ENCODE measurements at regions of chr12 and their contacts with region 1.

Region 1: GRCh38 chr12:57069523-57069922 is 9.1 kb downstream of the NEMP1 start:
- DNase-seq: no peak
- H3K4me3 ChIP-seq: no peak overlapping the region
- H3K27ac ChIP-seq: peak overlapping the region; percentile 82
- H3K4me1 ChIP-seq: peaks cover 5% of the 10 kb centered on the region
- H3K27me3 ChIP-seq: no peaks in the 10 kb centered on the region
- CTCF ChIP-seq: peak; percentile 86 to 93 (median 87)
- POLR2A ChIP-seq: no peak

Region 2: GRCh38 chr12:57112492-57113294 is 43.2 kb after region 1 on chr12:
- intact Hi-C with region 1: loop called (anchors 2 kb)
- DNase-seq: peak in 1 of 2 donors; percentile 87
- H3K4me3 ChIP-seq: peak overlapping the region; percentile 61 to 90
- H3K27ac ChIP-seq: peak overlapping the region; percentile 100
- H3K4me1 ChIP-seq: peaks cover 33% of the 10 kb centered on the region
- H3K27me3 ChIP-seq: no peaks in the 10 kb centered on the region
- CTCF ChIP-seq: no peak
- POLR2A ChIP-seq: no peak

Region 3: DNA sequence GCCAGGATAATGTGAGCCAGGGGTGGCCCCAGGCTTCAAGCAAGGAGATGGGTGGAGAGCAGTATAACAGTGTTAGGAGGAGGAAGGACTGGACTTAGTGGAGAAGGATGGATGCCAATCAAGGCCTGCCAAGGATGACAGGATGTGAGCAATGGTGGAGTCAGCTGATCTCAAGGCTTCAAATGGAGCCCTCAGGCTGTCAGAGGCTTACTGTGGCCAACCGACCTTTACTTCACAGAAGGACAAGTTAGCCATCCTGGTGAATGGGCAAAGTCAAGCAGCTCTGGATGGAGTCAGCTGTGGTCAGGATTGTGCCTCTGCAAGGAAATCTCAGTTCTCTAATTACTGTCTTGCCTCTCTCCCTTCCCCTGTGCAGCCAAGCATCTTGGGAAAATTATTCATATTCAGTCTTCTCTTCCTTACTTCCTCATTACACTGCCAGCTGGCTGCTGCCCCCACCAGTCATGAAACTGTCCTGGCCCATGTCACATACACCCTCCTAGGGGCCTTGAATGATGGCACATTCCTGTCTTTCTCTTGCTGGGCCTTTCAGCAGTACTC is 49.3 kb after region 1 on chr12:
- intact Hi-C with region 1: loop called (anchors 2 kb)
- DNase-seq: peak in 1 of 2 donors; percentile 65
- H3K4me3 ChIP-seq: no peak overlapping the region
- H3K27ac ChIP-seq: no peak overlapping the region
- H3K4me1 ChIP-seq: no peaks in the 10 kb centered on the region
- H3K27me3 ChIP-seq: no peaks in the 10 kb centered on the region
- CTCF ChIP-seq: no peak
- POLR2A ChIP-seq: no peak

Region 4: DNA sequence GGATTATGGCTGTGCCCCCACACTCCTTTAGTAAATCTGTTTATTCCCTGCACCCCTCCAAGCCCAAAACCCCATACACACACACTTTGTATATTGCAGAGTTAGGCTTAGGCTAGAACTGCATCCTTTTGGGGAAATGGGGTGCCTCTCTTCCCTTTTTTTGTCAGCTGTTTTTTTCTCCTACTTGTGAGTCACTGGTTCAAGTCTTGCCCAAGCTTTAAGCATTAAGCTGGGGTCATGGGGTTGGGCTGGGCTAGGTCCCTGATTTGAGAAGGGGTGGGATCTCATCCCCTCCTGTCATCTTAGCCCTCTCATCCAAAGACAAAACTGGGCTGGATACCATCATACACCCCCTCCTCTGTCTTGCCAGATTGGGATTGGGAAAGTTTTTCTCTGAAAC is 60.4 kb after region 1 on chr12:
- intact Hi-C with region 1: no loop called
- DNase-seq: no peak
- H3K4me3 ChIP-seq: peak overlapping the region; percentile 79 to 90
- H3K27ac ChIP-seq: peak overlapping the region; percentile 99
- H3K4me1 ChIP-seq: peaks cover 73% of the 10 kb centered on the region
- H3K27me3 ChIP-seq: no peaks in the 10 kb centered on the region
- CTCF ChIP-seq: no peak
- POLR2A ChIP-seq: peak in 1 of 2 donors; percentile 2